PC-9 (cell line): ENCODE measurements at regions of chr1 and their contacts with region 1.

Region 1: GRCh38 chr1:210250998-210251679 is 18.5 kb downstream of the SERTAD4 start:
- DNase-seq: peak; percentile 81 to 95
- H3K4me3 ChIP-seq: peak overlapping the region; percentile 61
- H3K27ac ChIP-seq: no peak overlapping the region
- H3K4me1 ChIP-seq: peaks cover 30% of the 10 kb centered on the region
- H3K27me3 ChIP-seq: no peaks in the 10 kb centered on the region
- CTCF ChIP-seq: no peak

Region 2: DNA sequence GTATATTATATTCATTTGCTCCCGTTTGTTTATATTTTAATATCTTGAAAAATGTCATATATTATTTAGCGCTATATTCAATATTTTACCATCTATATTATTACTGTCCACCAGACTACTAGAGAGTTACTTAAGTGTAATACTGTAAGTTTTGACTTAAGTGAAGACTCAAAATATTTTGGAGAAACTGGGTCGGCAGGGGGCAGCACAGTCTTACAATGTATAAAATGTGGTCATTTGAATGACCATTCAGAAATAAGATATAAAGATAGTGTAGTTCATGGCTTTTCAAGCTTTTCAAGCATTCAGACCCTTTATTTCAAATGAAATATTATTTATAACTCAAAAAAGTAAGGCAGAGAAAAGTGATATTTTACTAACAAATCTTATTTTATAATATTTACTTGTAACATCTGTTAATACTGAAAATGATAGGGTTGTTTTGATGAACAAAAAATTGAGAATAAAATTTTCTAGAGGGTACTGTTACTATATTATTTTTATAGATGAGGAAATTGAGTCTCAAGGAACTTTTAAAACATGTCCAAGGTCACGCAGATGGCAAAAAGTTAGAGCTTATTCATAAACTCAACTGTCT is 107.6 kb before region 1 on chr1:
- CTCF ChIA-PET with region 1: no interaction called
- POLR2A ChIA-PET with region 1: no interaction called
- intact Hi-C with region 1: loop called (anchors 1 kb)
- DNase-seq: peak; percentile 41 to 74
- H3K4me3 ChIP-seq: no peak overlapping the region
- H3K27ac ChIP-seq: no peak overlapping the region
- H3K4me1 ChIP-seq: no peaks in the 10 kb centered on the region; the same call in 1 of the 2 replicates
- H3K27me3 ChIP-seq: no peaks in the 10 kb centered on the region
- CTCF ChIP-seq: peak; percentile 91

Region 3: DNA sequence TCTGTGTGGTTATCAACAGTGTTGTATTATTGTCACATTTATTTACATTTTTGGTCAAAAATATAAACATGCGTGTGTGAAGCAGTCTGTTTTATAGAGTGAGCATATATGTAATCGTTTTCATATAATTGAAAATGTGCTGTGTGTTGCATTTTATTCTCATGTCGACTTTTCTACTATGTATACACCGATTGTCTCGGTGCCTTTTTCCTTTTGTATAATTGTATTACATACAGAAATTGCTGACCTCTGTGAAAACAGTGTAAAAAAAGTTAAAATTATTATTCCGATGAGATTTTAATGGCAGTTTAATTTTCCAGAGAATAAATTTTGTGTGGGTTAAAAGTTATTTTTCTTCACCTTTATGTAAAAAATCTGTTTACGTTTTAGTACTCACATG is 80.9 kb before region 1 on chr1:
- CTCF ChIA-PET with region 1: no interaction called
- POLR2A ChIA-PET with region 1: no interaction called
- intact Hi-C with region 1: no loop called
- DNase-seq: no peak
- H3K4me3 ChIP-seq: no peak overlapping the region
- H3K27ac ChIP-seq: no peak overlapping the region
- H3K4me1 ChIP-seq: no peaks in the 10 kb centered on the region
- H3K27me3 ChIP-seq: no peaks in the 10 kb centered on the region
- CTCF ChIP-seq: no peak

Region 4: GRCh38 chr1:210233216-210234020 is 17.7 kb before region 1 on chr1:
- CTCF ChIA-PET with region 1: interaction called, 9 read pairs
- POLR2A ChIA-PET with region 1: interaction called, 5 read pairs
- intact Hi-C with region 1: loop called (anchors 1 kb)
- DNase-seq: peak; percentile 75 to 77
- H3K4me3 ChIP-seq: peak overlapping the region; percentile 96
- H3K27ac ChIP-seq: peak overlapping the region; percentile 41
- H3K4me1 ChIP-seq: peaks cover 31% of the 10 kb centered on the region
- H3K27me3 ChIP-seq: no peaks in the 10 kb centered on the region
- CTCF ChIP-seq: no peak

Region 5: DNA sequence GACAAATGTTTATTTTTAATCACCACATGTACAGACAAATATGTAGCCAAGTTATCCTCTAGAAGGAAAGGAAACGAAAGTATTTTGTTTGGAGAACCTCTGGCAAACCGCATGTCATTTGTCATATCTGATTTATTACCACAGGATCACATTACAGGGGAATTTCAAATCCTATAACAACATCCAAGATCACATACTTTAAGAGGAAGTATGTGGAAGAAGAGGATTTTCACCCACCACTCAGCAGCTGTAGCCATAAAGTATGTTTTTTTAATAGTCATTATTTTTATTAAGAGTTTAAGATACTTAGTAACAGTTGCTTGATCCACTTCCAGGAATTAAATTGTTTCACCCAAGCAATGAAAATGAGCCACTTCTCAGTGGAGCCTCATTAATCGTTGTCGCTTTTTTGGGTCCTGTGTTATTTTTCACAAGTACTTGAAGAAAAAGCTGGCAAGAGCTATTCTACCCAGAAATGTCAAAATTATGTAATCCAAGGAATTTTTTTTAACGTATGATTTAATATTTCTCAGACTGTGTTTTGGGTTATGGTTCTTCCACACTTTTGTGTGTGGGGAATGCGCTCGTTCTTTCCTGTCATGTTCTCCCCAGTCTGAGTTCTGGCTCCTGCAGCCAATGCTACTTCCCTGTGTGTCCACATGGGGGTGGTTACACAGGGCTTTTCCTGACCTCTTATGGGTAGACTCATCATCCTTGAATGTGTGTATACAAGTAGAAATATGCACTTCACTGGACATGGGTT is 11.6 kb before region 1 on chr1:
- CTCF ChIA-PET with region 1: interaction called, 9 read pairs
- POLR2A ChIA-PET with region 1: interaction called, 16 read pairs
- intact Hi-C with region 1: loop called (anchors 1 kb)
- DNase-seq: peak in 1 of 2 experiments; percentile 74
- H3K4me3 ChIP-seq: no peak overlapping the region
- H3K27ac ChIP-seq: no peak overlapping the region
- H3K4me1 ChIP-seq: peaks cover 29% of the 10 kb centered on the region
- H3K27me3 ChIP-seq: no peaks in the 10 kb centered on the region
- CTCF ChIP-seq: peak; percentile 44; the same call in 1 of the 2 replicates